ENCODE measurements at regions of chr14 and their contacts with region 1.

Region 1: DNA sequence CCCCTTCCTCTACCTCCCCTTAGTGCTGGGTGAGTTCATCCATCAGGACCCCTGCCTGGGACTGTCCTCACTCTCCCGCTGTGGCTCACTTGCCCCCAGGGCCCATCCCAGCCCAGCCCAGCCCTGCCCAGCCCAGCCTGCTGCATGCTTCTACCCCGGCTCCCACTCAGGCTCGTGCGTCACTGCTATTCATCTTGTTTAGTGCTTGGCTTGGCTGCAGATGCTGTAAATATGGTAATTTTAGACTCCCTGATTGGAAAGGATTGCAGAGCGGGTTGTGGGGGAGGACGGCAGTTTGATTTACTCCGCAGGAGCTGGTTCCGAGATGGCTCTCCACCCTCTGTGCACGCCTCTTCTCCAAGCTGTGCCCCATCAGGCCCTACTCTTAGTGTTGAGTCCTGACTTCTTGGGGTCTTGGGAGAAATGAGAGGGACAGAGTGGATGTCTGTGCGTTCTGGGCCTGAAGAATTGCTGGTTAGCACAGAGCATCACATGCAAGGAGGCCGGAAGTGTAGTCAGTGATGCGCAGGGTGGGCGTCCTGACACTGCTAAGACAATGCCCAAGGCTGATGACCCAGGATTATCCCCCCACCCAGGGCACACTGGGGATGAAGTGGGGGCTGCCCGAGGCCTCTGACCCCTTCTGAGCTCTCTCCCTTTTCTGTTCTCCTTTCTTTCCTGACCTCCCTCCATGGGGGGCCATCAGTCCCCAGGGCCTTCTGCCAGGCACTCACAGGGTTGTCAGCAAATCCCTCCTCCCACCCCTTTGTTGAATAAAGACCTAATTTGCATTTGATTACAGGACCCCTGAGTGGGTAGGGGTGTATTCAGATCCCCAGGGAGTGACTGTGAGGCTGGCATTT is 244.4 kb downstream of the ZFP36L1 start:
- DNase-seq: peak; percentile 98
- H3K4me3 ChIP-seq: no peak overlapping the region
- H3K27ac ChIP-seq: peak overlapping the region; percentile 93 to 96 (median 96)
- H3K4me1 ChIP-seq: peaks cover 0 to 98% (median 86%) of the 10 kb centered on the region in 4 donors
- H3K27me3 ChIP-seq: no peaks in the 10 kb centered on the region
- CTCF ChIP-seq: no peak
- EP300 ChIP-seq: peak; percentile 96 to 99 (median 98)
- POLR2A ChIP-seq: peak in 1 of 2 donors; percentile 3

Region 2: GRCh38 chr14:67943947-67944346 is 604.5 kb before region 1 on chr14:
- intact Hi-C with region 1: loop called (anchors 5 kb)
- DNase-seq: peak; percentile 94
- H3K4me3 ChIP-seq: no peak overlapping the region
- H3K27ac ChIP-seq: peak overlapping the region; percentile 29 to 86 (median 82)
- H3K4me1 ChIP-seq: peaks cover 0 to 57% (median 51%) of the 10 kb centered on the region in 4 donors
- H3K27me3 ChIP-seq: no peaks in the 10 kb centered on the region
- CTCF ChIP-seq: peak; percentile 61 to 95 (median 88)
- EP300 ChIP-seq: no peak
- POLR2A ChIP-seq: no peak

Region 3: GRCh38 chr14:68089146-68089731 is 459.2 kb before region 1 on chr14:
- intact Hi-C with region 1: loop called (anchors 5 kb)
- DNase-seq: peak; percentile 71
- H3K4me3 ChIP-seq: peak overlapping the region in 2 of 4 donors; percentile 36 to 37
- H3K27ac ChIP-seq: peak overlapping the region; percentile 15 to 85 (median 78)
- H3K4me1 ChIP-seq: peaks cover 0 to 24% (median 14%) of the 10 kb centered on the region in 4 donors
- H3K27me3 ChIP-seq: no peaks in the 10 kb centered on the region
- CTCF ChIP-seq: no peak
- EP300 ChIP-seq: no peak
- POLR2A ChIP-seq: no peak

Region 4: DNA sequence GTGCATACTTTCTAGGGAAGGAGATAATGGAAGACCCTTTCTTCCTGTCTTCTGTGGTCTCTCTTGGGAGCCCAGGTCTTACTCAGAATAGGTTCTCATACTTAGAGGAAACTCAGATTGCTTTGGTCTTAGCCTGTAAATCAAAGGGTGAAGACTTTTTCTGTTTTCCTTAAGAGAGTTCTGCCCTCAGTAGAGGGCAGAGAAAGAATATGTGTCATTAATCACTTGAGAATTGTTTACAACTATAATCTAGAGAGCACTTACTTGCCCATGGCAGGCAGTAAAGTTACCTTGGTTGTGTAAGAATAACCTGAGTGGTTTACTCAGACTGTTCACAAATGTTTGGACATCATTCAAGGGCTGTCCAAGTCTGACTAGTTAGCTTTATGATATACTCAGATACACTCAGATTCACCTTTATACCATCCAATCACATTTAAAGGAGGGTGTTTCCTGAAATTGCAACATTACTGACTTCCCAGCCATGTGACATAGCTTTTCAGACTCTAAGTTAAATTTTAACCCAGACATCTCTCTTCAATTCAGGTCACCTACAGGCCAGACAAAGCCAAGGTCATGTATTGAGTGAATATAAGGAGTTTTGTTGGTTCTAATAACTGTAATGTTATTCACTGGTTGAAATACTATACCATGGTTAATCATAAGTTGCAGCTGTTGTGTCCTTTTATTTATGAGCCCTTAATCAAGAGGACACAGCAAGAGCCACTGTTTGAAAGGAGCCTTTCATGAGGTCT is 356.7 kb before region 1 on chr14:
- intact Hi-C with region 1: loop called (anchors 5 kb)
- DNase-seq: no peak
- H3K4me3 ChIP-seq: no peak overlapping the region
- H3K27ac ChIP-seq: peak overlapping the region in 3 of 4 donors; percentile 82 to 87 (median 85)
- H3K4me1 ChIP-seq: peaks cover 0 to 57% (median 36%) of the 10 kb centered on the region in 4 donors
- H3K27me3 ChIP-seq: no peaks in the 10 kb centered on the region
- CTCF ChIP-seq: no peak
- EP300 ChIP-seq: peak; percentile 71 to 92 (median 86)
- POLR2A ChIP-seq: no peak

Region 5: DNA sequence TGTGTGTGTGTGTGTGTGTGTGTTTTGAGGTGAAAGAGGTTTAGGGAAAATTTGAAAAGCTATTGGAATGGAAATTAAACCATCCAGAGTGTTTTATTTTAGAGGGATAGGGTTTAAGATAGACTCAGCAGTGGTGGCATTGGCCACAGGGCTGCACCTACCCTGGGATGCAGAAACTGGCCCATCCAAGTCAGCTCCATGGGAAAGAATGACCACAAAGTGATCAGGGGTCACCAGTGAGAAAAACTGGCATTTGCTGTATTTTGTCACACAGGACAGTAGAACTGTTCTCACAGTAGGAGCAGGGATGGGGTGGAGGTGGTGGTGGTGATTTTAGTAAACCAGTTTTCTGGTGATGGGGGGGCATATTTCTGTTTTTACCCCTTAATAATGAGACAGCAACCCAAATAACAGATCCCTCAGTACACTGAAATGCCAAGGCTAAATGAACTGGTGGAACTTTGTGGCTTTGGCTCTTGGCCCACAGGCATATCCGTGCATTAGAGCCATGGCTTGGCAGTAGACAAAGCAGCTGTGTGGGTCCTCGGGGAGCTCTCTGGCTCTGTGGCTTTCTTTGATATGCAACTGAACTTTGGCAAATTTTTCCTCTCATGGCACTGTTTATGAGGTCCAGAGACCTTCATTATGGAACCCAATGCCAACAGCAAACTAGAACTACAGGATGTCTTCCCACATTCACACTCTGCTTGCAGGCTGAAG is 103.8 kb before region 1 on chr14:
- intact Hi-C with region 1: loop called (anchors 5 kb)
- DNase-seq: no peak
- H3K4me3 ChIP-seq: no peak overlapping the region
- H3K27ac ChIP-seq: peak overlapping the region in 2 of 4 donors; percentile 17 to 22
- H3K4me1 ChIP-seq: peaks cover 2 to 68% (median 43%) of the 10 kb centered on the region in 4 donors
- H3K27me3 ChIP-seq: no peaks in the 10 kb centered on the region
- CTCF ChIP-seq: no peak
- EP300 ChIP-seq: no peak
- POLR2A ChIP-seq: no peak

Region 6: DNA sequence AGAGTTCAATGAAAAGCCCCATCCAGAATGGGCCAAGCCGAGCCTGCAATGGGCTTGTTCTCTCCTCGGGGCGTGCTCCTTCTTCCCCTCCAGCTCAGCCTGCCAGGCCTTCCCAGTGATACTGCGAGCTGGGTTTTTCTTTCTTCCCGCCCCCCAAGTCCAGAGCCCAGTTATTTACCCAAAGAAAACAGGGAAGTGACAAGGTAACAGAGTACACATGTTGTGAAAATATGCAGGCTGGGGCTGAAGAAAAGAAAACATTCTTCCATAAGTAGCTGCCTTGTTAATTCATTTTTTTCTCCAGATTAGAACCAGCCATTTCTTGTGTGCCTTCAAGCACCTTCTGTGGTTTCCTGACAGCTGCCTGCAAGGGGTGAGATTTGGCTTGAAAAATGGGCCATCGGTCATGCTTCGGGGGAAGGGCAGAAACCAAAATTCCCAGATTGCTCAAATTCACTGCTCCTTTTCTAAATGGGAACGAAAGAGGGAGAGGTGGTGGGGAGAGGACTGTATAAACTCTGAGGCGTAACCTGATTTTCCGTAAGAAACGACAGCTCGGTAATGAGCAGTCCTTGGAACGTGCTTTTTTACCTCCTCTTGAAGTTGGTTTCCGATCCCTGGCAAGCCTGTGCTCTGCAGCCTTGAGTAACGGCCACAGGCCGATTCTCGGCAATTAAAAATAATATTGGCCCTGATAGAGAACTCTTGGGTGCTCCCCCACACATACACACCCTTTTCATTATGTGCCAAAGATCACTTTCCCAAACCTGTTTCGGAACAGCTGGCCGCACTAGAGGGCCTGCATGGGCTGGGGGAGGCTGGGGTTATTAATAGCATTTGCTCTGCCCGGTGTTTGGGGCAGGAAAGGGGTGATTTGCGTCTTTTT is 15.1 kb after region 1 on chr14:
- intact Hi-C with region 1: no loop called
- DNase-seq: no peak
- H3K4me3 ChIP-seq: no peak overlapping the region
- H3K27ac ChIP-seq: peak overlapping the region; percentile 56 to 63 (median 62)
- H3K4me1 ChIP-seq: peaks cover 0 to 44% (median 27%) of the 10 kb centered on the region in 4 donors
- H3K27me3 ChIP-seq: no peaks in the 10 kb centered on the region
- CTCF ChIP-seq: no peak
- EP300 ChIP-seq: no peak
- POLR2A ChIP-seq: no peak

Region 7: DNA sequence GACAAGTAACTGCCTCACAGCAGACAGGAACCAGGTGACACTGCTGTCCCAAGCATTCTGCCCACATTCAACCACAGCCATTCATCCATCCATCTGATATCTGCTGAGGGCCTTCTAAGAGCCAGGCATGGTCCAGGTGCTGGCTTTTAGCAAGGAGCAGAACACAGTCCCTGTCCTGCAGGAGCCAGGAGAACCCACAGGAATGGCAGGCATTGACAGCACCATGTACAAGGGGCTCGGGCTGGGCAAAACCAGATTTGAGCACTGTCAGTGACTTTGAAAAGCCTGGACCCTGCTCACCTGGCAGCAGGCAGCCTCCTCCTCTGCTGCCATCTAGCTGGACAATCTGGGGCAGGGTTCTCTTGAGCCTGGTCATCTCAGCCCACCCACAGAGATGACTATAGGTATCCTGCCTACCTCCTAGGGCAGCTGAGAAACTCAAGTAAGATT is 107.5 kb after region 1 on chr14:
- intact Hi-C with region 1: loop called (anchors 5 kb)
- DNase-seq: no peak
- H3K4me3 ChIP-seq: no peak overlapping the region
- H3K27ac ChIP-seq: peak overlapping the region; percentile 7 to 95 (median 91)
- H3K4me1 ChIP-seq: peaks cover 0 to 86% (median 78%) of the 10 kb centered on the region in 4 donors
- H3K27me3 ChIP-seq: no peaks in the 10 kb centered on the region
- CTCF ChIP-seq: no peak
- EP300 ChIP-seq: no peak
- POLR2A ChIP-seq: no peak

Region 8: GRCh38 chr14:68795597-68796417 is 247.4 kb after region 1 on chr14:
- intact Hi-C with region 1: loop called (anchors 2 kb)
- DNase-seq: peak; percentile 95
- H3K4me3 ChIP-seq: peak overlapping the region; percentile 76 to 88 (median 80)
- H3K27ac ChIP-seq: peak overlapping the region; percentile 98 to 100 (median 99)
- H3K4me1 ChIP-seq: peaks cover 0 to 18% (median 9%) of the 10 kb centered on the region in 4 donors
- H3K27me3 ChIP-seq: no peaks in the 10 kb centered on the region
- CTCF ChIP-seq: peak in 3 of 4 experiments; percentile 87 to 97 (median 95)
- EP300 ChIP-seq: peak; percentile 2 to 57 (median 48)
- POLR2A ChIP-seq: peak; percentile 84 to 90

Measured in sigmoid colon (tissue), 7 donors.